Prostate gland (tissue), 2 donors: ENCODE measurements at regions of chr19 and their contacts with region 1.

Region 1: GRCh38 chr19:7535035-7535992 is at the start of gene PNPLA6:
- DNase-seq: peak; percentile 96
- H3K4me3 ChIP-seq: peak within 1 kb of the TSS; percentile 85 to 93
- H3K27ac ChIP-seq: peak within 1 kb of the TSS; percentile 86 to 91
- H3K4me1 ChIP-seq: no peaks in the 10 kb centered on the region
- H3K27me3 ChIP-seq: no peaks in the 10 kb centered on the region
- CTCF ChIP-seq: peak in 1 of 4 experiments; percentile 19
- POLR2A ChIP-seq: peak; percentile 64
- total RNA-seq, gene PNPLA6: 74.6 to 75.2 TPM

Region 2: GRCh38 chr19:7349961-7350711 is 185.2 kb before region 1 on chr19:
- intact Hi-C with region 1: loop called (anchors 10 kb)
- DNase-seq: no peak
- H3K4me3 ChIP-seq: no peak overlapping the region
- H3K27ac ChIP-seq: no peak overlapping the region
- H3K4me1 ChIP-seq: no peaks in the 10 kb centered on the region
- H3K27me3 ChIP-seq: no peaks in the 10 kb centered on the region
- CTCF ChIP-seq: no peak
- POLR2A ChIP-seq: no peak

Region 3: DNA sequence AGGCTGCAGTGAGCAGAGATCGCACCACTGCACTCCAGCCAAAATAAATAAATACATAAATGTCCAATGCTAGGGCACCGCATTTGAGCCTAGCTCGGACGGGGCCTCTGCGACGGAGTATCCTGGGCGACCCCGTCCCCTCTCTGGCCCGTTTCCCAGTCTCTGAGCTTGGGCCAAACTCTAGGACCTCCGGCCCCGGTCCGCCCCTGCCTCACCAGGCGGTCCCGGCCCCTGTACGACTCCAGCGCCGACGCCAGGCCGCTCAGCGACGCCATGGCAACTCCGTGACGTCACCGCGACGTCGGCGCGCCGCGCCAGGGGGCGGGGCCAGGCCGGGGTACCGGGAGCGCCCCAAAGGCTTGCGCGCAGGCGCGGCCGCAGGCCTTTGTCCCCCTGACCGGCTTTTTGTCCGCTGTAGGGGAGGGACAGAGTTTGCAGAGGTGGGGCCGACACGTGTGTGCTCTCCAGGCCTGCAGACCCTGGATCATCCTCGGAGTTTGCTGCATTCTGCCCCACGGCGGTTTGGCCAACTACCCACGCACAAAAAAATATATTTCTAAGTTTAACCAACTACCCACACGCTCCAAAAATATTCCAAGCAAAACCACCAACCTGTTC is 46.5 kb before region 1 on chr19 and contains the start of gene PEX11G:
- intact Hi-C with region 1: loop called (anchors 5 kb)
- DNase-seq: peak; percentile 83
- H3K4me3 ChIP-seq: peak within 1 kb of the TSS; percentile 42 to 59
- H3K27ac ChIP-seq: peak within 1 kb of the TSS; percentile 84
- H3K4me1 ChIP-seq: no peaks in the 10 kb centered on the region
- H3K27me3 ChIP-seq: no peaks in the 10 kb centered on the region
- CTCF ChIP-seq: peak in 2 of 4 experiments; percentile 6 to 30
- POLR2A ChIP-seq: peak; percentile 82
- total RNA-seq, gene PEX11G: 13.1 to 17.4 TPM

Region 4: DNA sequence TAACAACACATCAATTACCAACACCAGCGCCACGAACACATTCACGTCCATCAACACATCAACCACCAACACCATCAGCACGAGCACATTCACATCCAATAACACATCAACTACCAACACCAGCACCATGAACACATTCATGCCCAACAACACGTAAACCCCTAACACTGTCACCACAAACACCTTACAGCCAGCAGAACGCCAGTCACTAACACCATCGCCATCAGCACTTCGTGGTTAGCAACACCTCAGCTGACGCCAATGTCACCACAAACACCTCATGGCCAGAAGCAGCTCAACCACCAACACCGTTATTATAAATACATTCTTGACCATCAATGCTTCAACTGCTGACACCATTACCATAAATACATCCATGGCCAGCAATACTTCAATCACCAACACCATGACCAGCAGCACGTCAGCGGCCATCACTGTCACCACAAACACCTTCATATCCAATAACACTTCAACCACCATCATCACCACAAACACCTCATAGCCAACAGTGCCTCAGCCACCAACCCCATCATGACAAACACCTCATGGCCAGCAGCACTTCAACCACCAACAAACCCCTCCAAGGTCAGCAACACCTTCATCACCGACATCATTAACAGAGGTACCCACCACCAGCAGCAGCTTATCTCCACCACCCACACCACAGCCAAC is 157.2 kb after region 1 on chr19:
- intact Hi-C with region 1: no loop called
- DNase-seq: no peak
- H3K4me3 ChIP-seq: no peak overlapping the region
- H3K27ac ChIP-seq: no peak overlapping the region
- H3K4me1 ChIP-seq: no peaks in the 10 kb centered on the region
- H3K27me3 ChIP-seq: peaks cover 5% of the 10 kb centered on the region
- CTCF ChIP-seq: no peak
- POLR2A ChIP-seq: no peak

Region 5: DNA sequence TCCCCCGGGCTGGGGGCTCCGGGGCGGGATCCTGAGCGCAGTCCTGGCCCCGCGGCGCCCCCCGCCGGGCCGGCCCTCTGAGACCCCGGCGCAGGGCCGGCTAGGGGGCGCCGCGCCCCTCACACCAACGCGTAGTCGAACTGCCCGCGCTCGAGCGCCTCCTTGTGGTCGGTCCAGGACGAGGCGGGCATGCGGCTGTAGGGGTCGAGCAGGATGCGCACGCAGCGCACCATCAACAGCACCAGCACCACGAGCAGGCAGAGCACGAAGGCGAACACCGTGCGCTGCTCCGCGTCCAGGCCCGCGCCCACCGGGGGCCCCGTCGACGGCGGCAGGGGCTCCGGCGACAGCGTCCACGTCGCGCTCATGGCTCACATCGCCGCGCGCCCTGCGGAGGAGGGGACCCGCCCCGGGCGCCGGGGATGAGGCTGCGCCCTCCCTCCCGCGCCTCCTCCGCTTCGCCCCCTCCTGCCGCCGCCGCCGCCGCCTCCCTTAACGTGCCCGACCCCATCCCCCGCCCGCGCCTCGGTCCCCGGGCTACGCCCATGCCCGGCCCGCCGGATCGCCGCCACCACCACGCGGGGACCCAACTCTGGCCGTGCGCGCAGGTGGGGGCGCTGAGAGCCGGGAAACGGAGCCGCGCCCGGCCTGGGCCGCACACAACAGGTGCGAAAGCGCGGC is 390.0 kb after region 1 on chr19:
- intact Hi-C with region 1: loop called (anchors 5 kb)
- DNase-seq: peak; percentile 37
- H3K4me3 ChIP-seq: peak overlapping the region; percentile 33 to 55
- H3K27ac ChIP-seq: peak overlapping the region in 1 of 2 donors; percentile 58
- H3K4me1 ChIP-seq: peaks cover 21% of the 10 kb centered on the region
- H3K27me3 ChIP-seq: no peaks in the 10 kb centered on the region
- CTCF ChIP-seq: peak; percentile 59 to 81 (median 75)
- POLR2A ChIP-seq: no peak